Activated naive CD4-positive, alpha-beta T cell treated with anti-CD3 and anti-CD28 coated beads, Interleukin-2, amount 10 ng/mL, durations not matched to agents 7 days and 5 days (primary cell): ENCODE measurements at regions of chr1 and their contacts with region 1.

Region 1: DNA sequence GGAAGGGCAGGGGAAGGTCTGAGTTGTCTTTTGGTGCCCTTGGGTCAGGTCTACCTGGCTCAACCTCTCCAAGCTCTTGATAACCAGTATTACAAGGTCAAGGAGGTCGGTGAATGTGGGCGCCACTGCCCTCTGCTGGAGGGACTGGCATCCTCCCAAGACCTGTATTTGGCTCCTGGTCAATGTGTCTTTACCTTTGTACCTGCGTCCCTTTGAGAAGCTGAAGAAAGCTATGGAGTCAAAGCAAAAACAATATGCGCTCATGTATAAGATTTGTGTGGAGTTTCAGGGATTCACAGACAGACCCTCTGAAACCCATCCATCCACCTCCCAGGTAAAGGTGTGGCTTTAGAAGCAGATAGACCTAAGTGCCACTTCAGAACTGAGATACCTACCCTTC is 61.8 kb upstream of the NBL1 start:
- DNase-seq: peak; percentile 83
- H3K4me3 Mint-ChIP-seq: no peak overlapping the region
- H3K27ac Mint-ChIP-seq: no peak overlapping the region
- H3K4me1 Mint-ChIP-seq: peaks cover 17% of the 10 kb centered on the region
- H3K27me3 Mint-ChIP-seq: peaks cover 24% of the 10 kb centered on the region

Region 2: DNA sequence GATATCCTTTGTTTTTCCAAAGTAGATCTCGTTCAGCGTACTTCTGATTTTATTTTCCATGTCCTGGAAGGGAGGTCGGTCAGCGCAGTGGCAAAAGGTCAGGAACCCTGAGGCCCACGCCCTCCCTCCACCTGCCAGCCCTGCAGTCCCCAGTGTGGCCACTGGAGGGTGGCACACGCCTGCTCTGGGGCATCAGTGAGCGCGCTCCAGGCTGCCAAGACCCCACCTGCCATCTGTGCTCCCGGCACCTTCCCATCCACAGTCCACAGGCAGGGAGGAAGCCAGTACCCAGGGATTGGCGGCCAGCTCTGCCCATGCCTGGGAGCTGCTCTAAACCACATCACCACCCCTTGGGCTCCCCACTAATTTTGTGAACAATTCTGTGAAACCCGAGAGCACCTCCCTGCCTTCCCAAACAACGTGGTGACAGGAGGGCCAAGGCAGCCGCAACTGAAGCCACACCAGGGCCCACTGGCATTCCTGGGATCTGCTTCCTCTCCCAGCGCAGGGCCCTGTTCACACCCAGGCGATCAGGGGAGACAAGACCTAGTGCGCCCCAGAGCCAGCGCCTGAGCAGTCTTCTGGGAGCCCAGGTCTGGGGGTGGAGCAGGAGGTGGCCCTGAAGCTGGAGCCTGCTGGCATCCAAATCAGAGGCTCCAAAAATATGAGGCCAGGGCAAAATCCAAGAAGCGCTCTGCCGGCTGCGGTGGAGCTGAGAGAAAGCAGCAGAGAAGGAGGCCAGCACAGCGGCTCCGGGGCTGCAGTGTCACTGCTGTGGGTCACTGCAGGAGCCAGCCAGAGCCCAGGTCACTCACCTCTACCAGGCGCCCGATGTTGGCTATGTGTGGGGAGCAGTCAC is 237.7 kb before region 1 on chr1:
- CTCF ChIA-PET with region 1: interaction called, 36 read pairs
- DNase-seq: peak; percentile 54
- H3K4me3 Mint-ChIP-seq: no peak overlapping the region
- H3K27ac Mint-ChIP-seq: peak overlapping the region; percentile 37
- H3K4me1 Mint-ChIP-seq: no peaks in the 10 kb centered on the region
- H3K27me3 Mint-ChIP-seq: no peaks in the 10 kb centered on the region

Region 3: DNA sequence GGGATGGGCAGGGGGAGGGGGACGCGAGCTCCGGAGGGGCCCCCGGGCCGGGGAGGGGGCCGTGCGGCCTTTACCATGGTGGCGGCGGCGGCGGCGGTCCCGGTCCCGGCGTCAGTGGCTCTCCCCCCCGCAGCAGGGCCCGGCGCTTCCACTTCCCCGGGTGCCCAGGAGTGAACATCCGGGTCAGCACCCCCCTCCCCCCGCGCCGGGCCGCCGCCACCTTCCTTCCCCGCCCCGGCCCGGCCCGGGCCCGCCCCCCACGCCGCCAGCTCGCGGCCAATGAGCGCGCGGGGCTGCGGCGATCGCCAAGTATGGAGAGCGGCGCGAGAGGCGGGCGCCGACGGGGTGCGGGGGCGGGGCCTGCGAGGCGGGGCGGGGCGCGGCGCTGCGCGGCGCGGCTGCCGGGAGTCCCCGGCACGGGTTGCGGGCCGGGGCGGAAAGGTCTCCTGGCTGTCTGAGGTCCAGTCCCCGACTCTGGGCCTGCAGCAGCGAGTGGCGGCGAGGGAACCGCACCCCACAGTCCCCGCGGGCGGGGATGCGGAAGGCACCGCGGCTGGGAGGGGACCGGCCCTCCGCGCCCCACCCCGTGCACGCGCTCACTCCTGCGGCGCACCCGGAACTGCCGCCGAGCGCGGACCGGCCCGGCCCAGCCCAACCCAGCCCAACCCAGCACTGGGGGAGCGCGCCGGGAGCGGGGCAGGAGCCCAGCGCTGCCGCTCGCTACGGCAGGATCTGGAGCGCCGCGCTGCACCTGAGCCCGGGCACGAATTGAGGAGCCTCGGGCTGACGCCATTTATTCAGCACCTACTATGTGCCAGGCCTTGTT is 96.7 kb before region 1 on chr1 and contains the start of gene CAPZB:
- CTCF ChIA-PET with region 1: interaction called, 25 read pairs
- DNase-seq: peak; percentile 95
- H3K4me3 Mint-ChIP-seq: peak within 1 kb of the TSS; percentile 93
- H3K27ac Mint-ChIP-seq: peak within 1 kb of the TSS; percentile 95
- H3K4me1 Mint-ChIP-seq: peaks cover 56% of the 10 kb centered on the region
- H3K27me3 Mint-ChIP-seq: no peaks in the 10 kb centered on the region

Region 4: GRCh38 chr1:19547814-19548213 is 34.5 kb before region 1 on chr1:
- CTCF ChIA-PET with region 1: no interaction called
- DNase-seq: no peak
- H3K4me3 Mint-ChIP-seq: no peak overlapping the region
- H3K27ac Mint-ChIP-seq: no peak overlapping the region
- H3K4me1 Mint-ChIP-seq: no peaks in the 10 kb centered on the region
- H3K27me3 Mint-ChIP-seq: peaks cover 22% of the 10 kb centered on the region

Region 5: GRCh38 chr1:19596714-19597495 is 14.6 kb after region 1 on chr1:
- CTCF ChIA-PET with region 1: interaction called, 19 read pairs
- DNase-seq: peak; percentile 98
- H3K4me3 Mint-ChIP-seq: peak overlapping the region; percentile 97
- H3K27ac Mint-ChIP-seq: peak overlapping the region; percentile 100
- H3K4me1 Mint-ChIP-seq: peaks cover 49% of the 10 kb centered on the region
- H3K27me3 Mint-ChIP-seq: peaks cover 14% of the 10 kb centered on the region

Region 6: DNA sequence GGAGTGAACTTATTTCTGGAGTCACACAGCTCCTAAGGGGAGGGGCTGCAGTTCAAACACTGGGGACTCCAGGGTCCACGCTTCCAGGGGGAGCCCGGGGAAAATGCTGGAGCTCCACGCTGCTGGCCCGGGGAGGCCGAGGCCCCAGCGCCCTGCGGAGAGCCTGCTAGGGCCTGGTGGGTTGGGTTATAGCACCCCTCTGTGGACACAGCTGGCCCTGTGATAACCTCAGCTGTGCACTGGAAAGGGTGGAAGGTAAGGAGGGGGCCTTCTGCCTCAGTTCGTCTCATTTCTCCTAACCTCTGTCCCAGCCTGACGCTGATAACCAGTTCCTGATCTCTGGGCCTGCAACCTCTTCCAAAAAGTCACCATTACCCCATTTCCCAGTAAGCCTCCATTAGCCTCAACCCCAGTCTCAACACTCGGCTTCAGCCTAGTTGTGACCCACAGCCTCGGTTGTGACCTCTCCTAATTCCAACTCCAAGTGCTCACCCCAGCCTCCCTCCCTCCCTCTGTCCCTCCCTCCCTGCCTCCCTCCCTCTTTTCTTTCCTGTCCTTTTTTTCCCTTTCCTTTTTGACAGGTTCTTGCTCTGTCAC is 68.9 kb after region 1 on chr1:
- CTCF ChIA-PET with region 1: interaction called, 12 read pairs
- DNase-seq: peak; percentile 70
- H3K4me3 Mint-ChIP-seq: no peak overlapping the region
- H3K27ac Mint-ChIP-seq: no peak overlapping the region
- H3K4me1 Mint-ChIP-seq: peaks cover 27% of the 10 kb centered on the region
- H3K27me3 Mint-ChIP-seq: peaks cover 6% of the 10 kb centered on the region

Region 7: GRCh38 chr1:19676438-19676922 is 94.2 kb after region 1 on chr1:
- CTCF ChIA-PET with region 1: no interaction called
- DNase-seq: peak; percentile 60
- H3K4me3 Mint-ChIP-seq: no peak overlapping the region
- H3K27ac Mint-ChIP-seq: no peak overlapping the region
- H3K4me1 Mint-ChIP-seq: no peaks in the 10 kb centered on the region
- H3K27me3 Mint-ChIP-seq: peaks cover 31% of the 10 kb centered on the region

Region 8: GRCh38 chr1:19728413-19729145 is 146.3 kb after region 1 on chr1:
- CTCF ChIA-PET with region 1: no interaction called
- DNase-seq: no peak
- H3K4me3 Mint-ChIP-seq: no peak overlapping the region
- H3K27ac Mint-ChIP-seq: no peak overlapping the region
- H3K4me1 Mint-ChIP-seq: no peaks in the 10 kb centered on the region
- H3K27me3 Mint-ChIP-seq: no peaks in the 10 kb centered on the region